Stomach (tissue), 19 donors: ENCODE measurements at regions of chr22 and their contacts with region 1.

Region 1: GRCh38 chr22:25774575-25775026 is 32.6 kb downstream of the MYO18B start:
- DNase-seq: peak in 1 of 2 donors; percentile 40
- H3K4me3 ChIP-seq: no peak overlapping the region
- H3K27ac ChIP-seq: no peak overlapping the region
- H3K4me1 ChIP-seq: no peaks in the 10 kb centered on the region
- H3K27me3 ChIP-seq: peaks cover 0 to 28% (median 3%) of the 10 kb centered on the region in 3 donors
- CTCF ChIP-seq: no peak
- EP300 ChIP-seq: no peak
- POLR2A ChIP-seq: no peak

Region 2: DNA sequence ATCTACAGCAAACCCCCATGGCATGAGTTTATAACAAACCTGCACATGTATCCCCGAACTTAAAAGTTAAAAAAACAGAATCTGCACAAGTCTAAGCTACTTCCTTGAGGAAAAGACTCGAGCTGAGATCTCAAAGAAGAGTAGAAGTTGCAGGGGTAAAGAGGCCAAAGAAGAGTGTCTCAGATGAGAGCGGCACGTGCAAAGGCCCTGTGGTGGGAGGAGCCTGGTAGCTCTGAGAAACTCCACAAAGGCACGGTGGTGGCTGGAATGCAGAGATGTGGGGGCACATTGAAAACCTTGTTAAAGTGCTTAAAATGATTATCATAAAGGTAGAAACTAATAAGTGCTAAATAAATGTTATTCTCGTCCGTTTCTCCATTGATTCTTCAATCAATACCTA is 313.3 kb before region 1 on chr22:
- intact Hi-C with region 1: loop called (anchors 5 kb)
- DNase-seq: no peak
- H3K4me3 ChIP-seq: no peak overlapping the region
- H3K27ac ChIP-seq: no peak overlapping the region
- H3K4me1 ChIP-seq: no peaks in the 10 kb centered on the region
- H3K27me3 ChIP-seq: no peaks in the 10 kb centered on the region
- CTCF ChIP-seq: no peak
- EP300 ChIP-seq: no peak
- POLR2A ChIP-seq: no peak